ENCODE measurements at regions of chr4 and their contacts with region 1.

Region 1: GRCh38 chr4:147160908-147161513 is 215.3 kb upstream of the TTC29 start:
- DNase-seq: peak; percentile 77
- H3K4me3 ChIP-seq: peak overlapping the region in 1 of 2 experiments; percentile 30; a peak in 1 of 4 replicates
- H3K27ac ChIP-seq: no peak overlapping the region
- H3K4me1 ChIP-seq: peaks cover 3 to 18% of the 10 kb centered on the region in 2 experiments; a peak in 3 of 4 replicates
- H3K27me3 ChIP-seq: no peaks in the 10 kb centered on the region
- CTCF ChIP-seq: peak; percentile 85
- EP300 ChIP-seq: no peak
- RAD21 ChIP-seq: peak; percentile 92

Region 2: DNA sequence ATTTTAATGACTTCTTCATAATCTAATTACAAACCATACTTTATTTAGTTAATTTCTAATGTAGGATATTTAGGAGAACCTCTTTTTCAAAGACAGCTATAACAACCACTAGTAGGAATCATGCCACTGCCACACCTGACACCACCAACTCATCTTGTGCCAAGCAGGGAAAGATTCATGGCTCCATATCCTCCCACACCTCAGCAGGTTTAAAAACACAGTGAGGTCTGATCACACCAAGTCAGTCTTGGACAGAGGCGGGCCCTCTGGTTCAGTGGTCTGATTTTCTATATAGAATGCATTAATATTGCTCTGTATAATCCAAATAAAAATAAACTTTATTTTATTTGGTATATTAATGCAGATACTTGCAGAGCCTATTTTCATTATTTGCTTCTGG is 12.3 kb after region 1 on chr4:
- CTCF ChIA-PET with region 1: interaction called, 13 read pairs
- POLR2A ChIA-PET with region 1: no interaction called
- DNase-seq: no peak
- H3K4me3 ChIP-seq: no peak overlapping the region
- H3K27ac ChIP-seq: no peak overlapping the region
- H3K4me1 ChIP-seq: peaks cover 0 to 2% of the 10 kb centered on the region in 2 experiments; a peak in 1 of 4 replicates
- H3K27me3 ChIP-seq: no peaks in the 10 kb centered on the region
- CTCF ChIP-seq: no peak
- EP300 ChIP-seq: no peak
- RAD21 ChIP-seq: no peak

Measured in SK-N-SH (cell line).